ENCODE measurements at regions of chr5 and their contacts with region 1.

Region 1: GRCh38 chr5:155686131-155686530 is 640.8 kb upstream of the SGCD start:
- DNase-seq: no peak
- CTCF ChIP-seq: no peak

Region 2: DNA sequence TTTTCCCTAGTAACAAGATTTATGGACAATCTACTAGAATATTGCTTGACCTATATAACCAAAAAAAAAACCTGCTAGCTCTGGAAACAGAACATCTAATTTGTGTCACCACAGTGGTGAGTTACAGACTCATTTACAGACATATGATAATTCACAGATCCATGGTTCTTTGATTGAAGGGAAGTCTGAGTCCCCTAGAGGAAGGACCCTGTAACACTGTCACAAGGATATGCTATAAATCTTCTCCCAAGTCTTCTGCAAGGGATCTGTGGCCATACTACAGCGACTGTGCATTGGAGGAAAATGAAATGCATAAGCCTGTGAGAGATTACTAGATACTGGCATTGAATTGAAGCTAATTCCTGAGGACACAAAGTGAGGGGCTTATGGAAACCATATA is 10.2 kb after region 1 on chr5:
- CTCF ChIA-PET with region 1: interaction called, 10 read pairs
- POLR2A ChIA-PET with region 1: no interaction called
- DNase-seq: no peak
- CTCF ChIP-seq: no peak

Region 3: DNA sequence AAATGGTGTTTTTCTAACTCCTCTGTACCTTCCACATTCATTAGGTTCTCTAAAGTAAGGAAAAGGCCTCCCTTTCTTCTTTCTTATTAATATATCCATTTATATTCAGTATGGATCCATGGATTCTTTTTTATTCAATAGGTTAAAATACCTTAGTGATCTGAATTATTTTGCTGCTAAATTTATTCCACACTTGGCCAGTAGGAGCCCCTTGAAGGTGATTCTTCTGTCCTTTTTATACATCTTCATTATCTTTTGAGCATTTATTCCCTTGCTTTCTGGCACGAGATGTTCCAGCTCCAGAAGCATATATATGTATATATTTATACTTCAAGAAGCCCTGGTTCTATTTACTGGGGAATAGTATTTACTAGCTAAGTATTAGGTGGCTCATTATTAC is 329.0 kb after region 1 on chr5:
- CTCF ChIA-PET with region 1: no interaction called
- POLR2A ChIA-PET with region 1: no interaction called
- DNase-seq: no peak
- CTCF ChIP-seq: no peak

Measured in GM10248 (cell line).